ENCODE measurements at regions of chr14 and their contacts with region 1.

Region 1: DNA sequence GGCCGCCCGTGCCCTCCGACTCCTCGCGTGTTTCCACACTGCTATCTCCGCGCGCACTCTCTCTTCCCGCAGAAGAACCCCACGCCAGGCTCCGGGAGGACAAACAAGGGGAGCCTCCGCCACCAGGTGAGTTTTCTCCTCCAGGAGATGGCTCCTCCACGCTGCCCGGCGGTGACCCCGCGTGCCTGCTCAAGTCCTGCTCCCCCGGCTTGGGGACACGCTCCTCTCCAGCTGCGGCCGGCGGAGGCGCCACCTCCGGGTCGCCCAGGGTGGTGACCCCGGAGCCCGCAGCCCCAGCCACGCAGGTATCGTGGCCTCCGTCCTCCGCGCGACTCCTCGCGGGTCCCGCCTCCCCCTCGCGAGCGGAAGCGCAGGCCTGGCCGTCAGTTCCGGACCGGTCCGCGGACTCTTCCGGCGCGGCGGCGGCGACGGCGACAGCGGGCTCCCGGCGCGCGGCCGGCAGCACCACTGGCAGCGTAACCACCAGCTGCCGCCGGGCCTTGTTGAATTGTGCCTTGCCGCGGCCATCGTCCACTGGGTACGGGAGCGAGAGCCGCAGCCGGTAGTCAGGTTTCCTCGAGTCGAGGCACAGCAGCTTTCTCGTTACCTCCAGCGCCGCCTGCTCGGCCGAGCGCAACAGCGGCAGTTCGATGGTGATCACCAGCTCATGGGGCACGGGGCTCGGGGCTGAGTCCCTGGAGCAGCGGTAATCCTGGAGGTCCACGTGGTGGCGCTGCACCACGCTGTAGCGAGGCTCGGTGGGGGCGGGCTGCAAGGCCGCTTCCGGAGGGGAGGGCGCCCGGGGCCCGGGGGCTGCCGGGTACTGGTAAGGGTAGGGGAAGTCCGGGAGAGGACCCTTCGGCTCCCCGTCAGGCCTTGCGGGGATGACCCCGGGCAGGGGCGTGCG is 1.2 kb downstream of the DNAAF2 start:
- DNase-seq: peak; percentile 94
- CTCF ChIP-seq: peak; percentile 96

Region 2: GRCh38 chr14:49852301-49853157 is 218.6 kb after region 1 on chr14 and contains the start of gene NEMF:
- in situ Hi-C with region 1: loop called (anchors 25 kb)
- DNase-seq: peak; percentile 73
- CTCF ChIP-seq: peak; percentile 80

Region 3: DNA sequence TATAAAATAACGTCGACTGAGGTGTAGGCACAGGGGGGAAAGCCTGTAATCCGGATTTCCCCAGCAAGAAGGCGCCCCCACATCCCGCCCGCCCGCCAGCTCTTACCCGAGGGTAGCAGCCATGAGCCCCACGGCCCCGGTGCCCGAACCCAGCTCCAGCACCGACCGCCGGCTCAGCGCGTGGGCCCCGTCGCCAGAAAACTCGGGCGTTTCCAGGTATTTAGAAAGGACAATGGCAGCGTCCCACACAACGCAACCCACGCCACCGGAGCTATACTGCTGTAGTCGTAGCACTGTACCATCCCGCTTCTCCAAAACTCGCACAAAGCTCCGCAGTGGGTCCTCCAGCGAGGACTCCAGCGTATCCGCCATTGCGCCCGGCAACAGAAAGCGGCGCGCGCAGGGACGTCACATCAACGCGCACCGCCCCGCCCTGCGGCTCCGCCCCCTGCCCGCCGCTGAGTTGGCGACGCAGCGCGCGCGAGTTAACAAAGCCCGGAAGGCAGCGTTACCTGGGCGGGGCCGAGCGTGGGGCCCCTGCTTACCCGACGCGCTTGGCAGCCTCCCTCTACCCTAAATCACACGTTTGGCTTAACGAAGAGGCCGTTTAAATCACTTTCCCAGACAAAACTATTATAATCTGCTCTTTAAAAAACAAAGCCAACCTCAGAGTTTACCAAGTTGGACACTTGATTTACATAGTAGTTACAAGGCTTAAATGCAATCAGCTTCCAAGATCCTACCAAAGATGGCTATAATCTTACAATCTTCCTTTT is 482.5 kb after region 1 on chr14 and contains the start of gene VCPKMT:
- in situ Hi-C with region 1: loop called (anchors 25 kb)
- DNase-seq: peak; percentile 92
- CTCF ChIP-seq: no peak

Region 4: GRCh38 chr14:50501642-50502041 is 867.7 kb after region 1 on chr14:
- in situ Hi-C with region 1: no loop called
- DNase-seq: no peak
- CTCF ChIP-seq: no peak